ENCODE measurements at regions of chr15 and their contacts with region 1.

Region 1: DNA sequence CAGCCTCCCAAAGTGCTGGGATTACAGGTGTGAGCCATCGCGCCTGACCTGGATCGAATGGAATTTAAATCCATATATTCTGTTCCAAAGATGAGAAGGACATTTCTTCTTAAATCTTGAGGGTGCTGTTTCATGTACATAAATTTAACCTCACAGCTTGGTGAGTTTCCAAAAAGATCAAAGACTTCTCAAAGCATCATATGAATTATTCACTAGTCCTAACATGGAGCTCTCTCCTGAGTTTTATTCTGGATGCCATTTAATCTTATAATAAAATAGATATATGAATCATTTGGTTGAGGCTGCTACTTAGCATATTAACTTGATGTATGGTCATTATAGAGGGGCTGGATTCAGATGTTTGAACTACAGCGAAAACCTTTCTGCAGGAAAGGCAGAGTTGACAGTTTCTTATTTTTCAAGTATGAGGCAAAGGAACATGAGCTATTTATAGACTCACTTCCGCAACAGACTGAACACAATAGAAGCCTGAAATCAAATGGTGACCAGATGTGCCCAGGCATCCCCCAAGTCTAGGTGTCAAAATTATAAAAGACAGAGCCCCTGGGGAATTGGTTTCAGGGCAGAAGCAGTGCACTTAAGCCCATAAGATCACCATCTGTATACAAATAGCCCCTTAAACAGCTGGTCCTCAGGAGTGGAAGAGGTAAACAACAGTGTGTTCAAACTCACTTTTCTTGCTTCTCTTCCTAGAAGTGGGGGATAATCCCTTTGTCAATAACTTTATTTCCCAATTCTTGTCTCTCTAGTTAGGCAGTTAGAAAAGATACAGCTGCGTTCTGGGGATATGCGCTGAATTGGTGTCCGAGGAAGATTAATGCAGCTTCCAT is 29.7 kb downstream of the STARD9 start:
- DNase-seq: no peak
- ATAC-seq: no peak; the same call in 2 of the 3 replicates
- H3K4me3 ChIP-seq: no peak overlapping the region
- H3K27ac ChIP-seq: peak overlapping the region; percentile 39; the same call in 1 of the 3 replicates
- H3K4me1 ChIP-seq: peaks cover 3 to 26% of the 10 kb centered on the region in 2 experiments; a peak in 3 of 5 replicates
- H3K27me3 ChIP-seq: no peaks in the 10 kb centered on the region
- CTCF ChIP-seq: no peak
- EP300 ChIP-seq: no peak
- POLR2A ChIP-seq: no peak
- RAD21 ChIP-seq: no peak

Region 2: GRCh38 chr15:42616107-42616506 is 11.0 kb after region 1 on chr15:
- CTCF ChIA-PET with region 1: no interaction called
- POLR2A ChIA-PET with region 1: interaction called, 16 read pairs
- in situ Hi-C with region 1: no loop called
- intact Hi-C with region 1: no loop called
- DNase-seq: no peak
- ATAC-seq: no peak
- H3K4me3 ChIP-seq: no peak overlapping the region
- H3K27ac ChIP-seq: no peak overlapping the region
- H3K4me1 ChIP-seq: peaks cover 9 to 13% of the 10 kb centered on the region in 2 experiments; a peak in 4 of 5 replicates
- H3K27me3 ChIP-seq: no peaks in the 10 kb centered on the region
- CTCF ChIP-seq: no peak
- EP300 ChIP-seq: no peak
- POLR2A ChIP-seq: no peak
- RAD21 ChIP-seq: no peak

Measured in K562 (cell line).